ENCODE measurements at regions of chr9 and their contacts with region 1.

Region 1: DNA sequence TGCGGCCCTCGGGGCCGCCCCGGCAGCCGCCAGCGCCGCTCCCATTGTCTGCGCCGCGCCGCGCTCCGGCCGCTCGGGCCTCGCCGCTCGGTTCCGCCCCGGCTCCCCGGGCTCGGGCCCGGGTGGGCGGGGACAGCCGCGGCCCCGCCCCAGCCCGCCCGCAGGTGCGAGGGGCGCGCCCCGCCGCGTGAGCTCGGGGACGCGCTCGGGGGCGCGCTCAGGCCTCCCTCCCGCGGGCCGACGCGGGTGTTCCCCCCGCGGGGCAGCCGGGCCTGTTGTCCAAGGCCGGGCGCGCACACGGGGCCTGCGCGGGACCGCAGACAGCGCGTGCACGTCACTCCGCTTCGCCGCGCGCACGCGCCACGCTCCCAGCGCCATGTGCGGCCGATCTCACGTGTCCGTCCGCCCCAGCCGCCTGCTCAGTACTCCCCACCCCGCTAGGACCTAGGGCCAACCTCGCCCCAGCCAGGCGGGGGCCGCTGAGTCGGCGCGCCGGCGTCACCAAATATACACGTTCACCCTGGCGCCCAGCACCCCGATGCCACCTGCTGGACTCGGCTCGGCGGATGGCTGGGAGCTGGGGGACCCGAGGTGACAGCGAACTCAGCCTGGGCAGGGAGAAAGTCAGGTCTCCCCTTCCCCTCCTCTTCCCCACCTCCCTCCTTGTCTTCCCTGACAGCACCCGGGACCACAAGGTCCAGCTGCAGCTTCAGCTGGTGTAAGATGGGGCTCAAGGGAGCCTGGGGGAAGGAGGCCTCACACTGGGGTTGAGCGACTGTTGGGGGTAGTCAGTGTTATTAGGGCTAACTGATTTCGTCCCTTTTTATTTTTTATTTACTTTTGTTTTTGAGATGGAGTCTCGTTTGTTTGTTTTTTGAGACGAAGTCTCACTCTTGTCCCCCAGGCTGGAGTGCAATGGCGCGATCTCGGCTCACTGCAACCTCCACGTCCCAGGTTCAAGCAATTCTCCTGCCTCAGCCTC is 14.3 kb downstream of the GBGT1 start:
- DNase-seq: peak; percentile 85
- ATAC-seq: peak; percentile 85
- H3K4me3 ChIP-seq: peak overlapping the region; percentile 55
- H3K27ac ChIP-seq: peak overlapping the region; percentile 72
- H3K4me1 ChIP-seq: peaks cover 15% of the 10 kb centered on the region
- H3K27me3 ChIP-seq: no peaks in the 10 kb centered on the region
- CTCF ChIP-seq: peak; percentile 23 to 32 (median 26); a peak in 4 of 6 replicates
- EP300 ChIP-seq: no peak
- POLR2A ChIP-seq: no peak
- RAD21 ChIP-seq: peak; percentile 27; the same call in 1 of the 2 replicates

Region 2: DNA sequence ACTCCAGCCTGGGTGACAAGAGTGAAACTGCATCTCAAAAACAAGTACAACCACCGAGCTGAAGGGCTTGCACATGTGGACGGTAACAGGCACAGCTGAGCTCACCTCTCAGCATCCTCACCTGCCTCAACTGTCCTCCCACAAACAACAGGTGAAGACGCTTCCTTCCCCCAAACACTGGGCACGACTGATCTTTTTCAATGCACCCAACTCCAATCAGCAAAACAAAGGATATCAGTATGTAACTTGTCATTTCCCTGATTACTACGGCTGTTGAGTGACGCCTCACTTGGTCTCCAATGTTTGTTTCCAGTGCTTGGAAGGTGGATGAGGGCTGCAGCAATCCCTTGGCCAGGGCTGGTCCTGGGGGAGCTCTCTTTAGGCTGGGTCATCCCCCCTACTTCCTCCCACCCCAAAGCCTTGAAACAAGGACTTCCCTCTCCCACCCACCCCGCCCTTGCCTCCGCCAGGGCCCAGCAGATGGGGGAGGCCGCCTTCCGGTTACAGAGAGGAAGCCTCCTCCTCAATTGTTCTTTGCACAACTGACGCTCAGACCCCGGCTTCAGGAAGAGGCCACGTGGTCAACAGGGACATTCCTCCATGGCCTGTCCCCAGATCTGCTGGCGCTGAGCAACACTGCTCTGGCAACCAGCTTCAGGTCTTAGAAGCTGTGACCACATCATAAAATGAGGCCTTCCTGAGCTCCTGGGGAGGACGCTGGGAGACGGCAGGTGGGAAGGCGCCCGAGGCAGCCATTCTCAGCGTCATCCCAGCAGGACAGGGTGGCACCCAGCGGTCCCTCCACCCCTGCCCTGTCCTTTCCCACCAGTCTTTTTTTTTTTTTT is 1879.0 kb before region 1 on chr9:
- CTCF ChIA-PET with region 1: no interaction called
- POLR2A ChIA-PET with region 1: no interaction called
- RAD21 ChIA-PET with region 1: no interaction called
- SMC1A ChIA-PET with region 1: no interaction called
- in situ Hi-C with region 1: loop called (anchors 25 kb)
- intact Hi-C with region 1: no loop called
- DNase-seq: no peak
- ATAC-seq: peak; percentile 31
- H3K4me3 ChIP-seq: peak overlapping the region; percentile 99
- H3K27ac ChIP-seq: peak overlapping the region; percentile 92
- H3K4me1 ChIP-seq: peaks cover 46% of the 10 kb centered on the region
- H3K27me3 ChIP-seq: no peaks in the 10 kb centered on the region
- CTCF ChIP-seq: no peak
- EP300 ChIP-seq: no peak
- POLR2A ChIP-seq: peak; percentile 46; the same call in 1 of the 2 replicates
- RAD21 ChIP-seq: no peak

Region 3: DNA sequence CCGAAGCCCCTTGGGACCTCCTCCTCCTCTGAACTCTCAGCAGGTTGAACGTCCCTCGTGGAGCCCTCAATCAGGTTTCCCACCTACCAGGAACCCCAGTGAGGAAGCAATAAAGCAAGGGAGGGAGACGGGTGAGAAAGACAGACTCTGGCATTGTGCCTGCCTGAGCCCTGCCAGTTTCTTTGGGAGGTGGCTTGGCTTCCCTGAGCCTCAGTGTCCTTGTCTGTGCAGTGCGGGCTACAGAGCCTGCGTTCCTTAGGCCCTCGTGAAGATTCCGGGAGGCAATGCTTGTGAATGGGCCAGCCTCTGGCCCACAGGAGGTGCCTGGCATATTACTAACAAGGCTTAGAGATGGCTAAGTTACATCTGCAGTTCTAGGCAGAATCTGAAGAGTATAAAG is 106.7 kb before region 1 on chr9:
- CTCF ChIA-PET with region 1: interaction called, 19 read pairs
- POLR2A ChIA-PET with region 1: no interaction called
- RAD21 ChIA-PET with region 1: interaction called, 6 read pairs
- SMC1A ChIA-PET with region 1: interaction called, 4 read pairs
- in situ Hi-C with region 1: loop called (anchors 5 kb)
- intact Hi-C with region 1: loop called (anchors 1 kb)
- DNase-seq: no peak
- ATAC-seq: no peak
- H3K4me3 ChIP-seq: no peak overlapping the region
- H3K27ac ChIP-seq: no peak overlapping the region
- H3K4me1 ChIP-seq: no peaks in the 10 kb centered on the region
- H3K27me3 ChIP-seq: no peaks in the 10 kb centered on the region
- CTCF ChIP-seq: no peak
- EP300 ChIP-seq: no peak
- POLR2A ChIP-seq: no peak
- RAD21 ChIP-seq: no peak

Region 4: GRCh38 chr9:133094842-133095393 is 54.5 kb before region 1 on chr9:
- CTCF ChIA-PET with region 1: interaction called, 21 read pairs
- POLR2A ChIA-PET with region 1: no interaction called
- RAD21 ChIA-PET with region 1: interaction called, 5 read pairs
- SMC1A ChIA-PET with region 1: interaction called, 7 read pairs
- in situ Hi-C with region 1: no loop called
- intact Hi-C with region 1: no loop called
- DNase-seq: no peak
- ATAC-seq: no peak
- H3K4me3 ChIP-seq: no peak overlapping the region
- H3K27ac ChIP-seq: no peak overlapping the region
- H3K4me1 ChIP-seq: no peaks in the 10 kb centered on the region
- H3K27me3 ChIP-seq: no peaks in the 10 kb centered on the region
- CTCF ChIP-seq: no peak
- EP300 ChIP-seq: no peak
- POLR2A ChIP-seq: no peak
- RAD21 ChIP-seq: no peak

Region 5: DNA sequence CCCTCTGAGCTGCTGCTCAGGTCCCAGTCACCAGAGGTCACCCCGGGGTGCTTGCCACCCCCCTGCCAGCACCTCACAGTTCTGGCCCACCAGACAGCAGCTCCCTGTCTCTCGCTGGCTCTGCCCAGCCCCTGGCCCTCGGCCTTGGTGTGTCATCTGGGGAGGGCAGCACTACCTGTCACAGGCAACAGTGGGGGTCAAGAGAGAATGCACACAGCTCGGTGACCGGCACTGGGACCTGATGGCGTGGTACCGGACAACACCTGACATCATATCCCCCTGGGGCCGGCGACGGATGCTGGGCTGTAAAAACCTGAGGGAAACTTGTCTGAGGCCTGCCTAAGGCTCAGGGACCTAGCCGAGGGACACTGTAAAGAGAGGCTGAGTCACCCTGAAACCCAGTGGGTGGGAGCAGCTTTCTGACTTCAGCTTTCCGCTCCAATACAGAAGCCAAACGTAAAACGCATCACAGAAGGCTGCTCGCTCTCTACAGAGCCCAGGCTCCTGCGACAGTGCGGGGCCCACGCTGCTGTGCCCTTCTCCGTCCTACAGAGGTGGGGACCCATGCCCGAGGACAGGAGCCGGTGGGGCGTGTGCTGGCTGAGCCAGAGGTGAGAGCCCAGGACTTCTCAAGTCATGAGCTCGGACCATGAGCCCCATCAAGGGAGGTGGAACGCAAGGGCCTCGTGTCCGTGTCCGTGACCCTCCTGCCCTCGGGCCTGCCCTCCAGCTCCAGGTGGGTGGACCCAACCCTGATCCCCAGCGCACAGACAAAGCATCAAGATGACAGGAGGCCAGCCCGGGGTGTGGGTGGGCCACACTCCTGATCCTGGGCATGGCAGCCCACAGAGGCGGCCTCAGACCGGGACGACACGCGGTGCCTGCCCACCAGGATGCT is 33.7 kb before region 1 on chr9:
- CTCF ChIA-PET with region 1: interaction called, 401 read pairs
- POLR2A ChIA-PET with region 1: interaction called, 66 read pairs
- RAD21 ChIA-PET with region 1: interaction called, 219 read pairs
- SMC1A ChIA-PET with region 1: interaction called, 44 read pairs
- in situ Hi-C with region 1: no loop called
- intact Hi-C with region 1: loop called (anchors 2 kb)
- DNase-seq: peak; percentile 79
- ATAC-seq: peak; percentile 88
- H3K4me3 ChIP-seq: peak overlapping the region; percentile 63; the same call in 1 of the 2 replicates
- H3K27ac ChIP-seq: peak overlapping the region; percentile 88
- H3K4me1 ChIP-seq: peaks cover 67% of the 10 kb centered on the region
- H3K27me3 ChIP-seq: no peaks in the 10 kb centered on the region
- CTCF ChIP-seq: no peak
- EP300 ChIP-seq: peak in 1 of 2 experiments; percentile 2; a peak in 1 of 4 replicates
- POLR2A ChIP-seq: no peak
- RAD21 ChIP-seq: no peak

Region 6: GRCh38 chr9:133133681-133134418 is 15.6 kb before region 1 on chr9:
- CTCF ChIA-PET with region 1: interaction called, 32 read pairs
- POLR2A ChIA-PET with region 1: interaction called, 7 read pairs
- RAD21 ChIA-PET with region 1: interaction called, 30 read pairs
- SMC1A ChIA-PET with region 1: interaction called, 48 read pairs
- in situ Hi-C with region 1: no loop called
- intact Hi-C with region 1: no loop called
- DNase-seq: no peak
- ATAC-seq: peak; percentile 93
- H3K4me3 ChIP-seq: no peak overlapping the region
- H3K27ac ChIP-seq: peak overlapping the region; percentile 88
- H3K4me1 ChIP-seq: peaks cover 39% of the 10 kb centered on the region
- H3K27me3 ChIP-seq: no peaks in the 10 kb centered on the region
- CTCF ChIP-seq: peak in 1 of 3 experiments; percentile 5; a peak in 1 of 6 replicates
- EP300 ChIP-seq: peak; percentile 88 to 98
- POLR2A ChIP-seq: peak; percentile 70
- RAD21 ChIP-seq: no peak

Region 7: GRCh38 chr9:134111064-134111463 is 961.6 kb after region 1 on chr9:
- CTCF ChIA-PET with region 1: no interaction called
- POLR2A ChIA-PET with region 1: no interaction called
- RAD21 ChIA-PET with region 1: no interaction called
- SMC1A ChIA-PET with region 1: no interaction called
- in situ Hi-C with region 1: no loop called
- intact Hi-C with region 1: no loop called
- DNase-seq: no peak
- ATAC-seq: 0 out of 3 replicates have a peak, but pooled peaks have one; percentile 39
- H3K4me3 ChIP-seq: no peak overlapping the region
- H3K27ac ChIP-seq: no peak overlapping the region
- H3K4me1 ChIP-seq: no peaks in the 10 kb centered on the region
- H3K27me3 ChIP-seq: no peaks in the 10 kb centered on the region
- CTCF ChIP-seq: no peak
- EP300 ChIP-seq: no peak
- POLR2A ChIP-seq: no peak
- RAD21 ChIP-seq: no peak

Measured in GM12878 (cell line).